WTC11 (cell line): ENCODE measurements at regions of chr22 and their contacts with region 1.

Region 1: GRCh38 chr22:47012589-47013411 is 250.3 kb downstream of the TBC1D22A start:
- DNase-seq: no peak
- ATAC-seq: peak; percentile 61
- H3K4me3 Mint-ChIP-seq: no peak overlapping the region
- H3K27ac Mint-ChIP-seq: peak overlapping the region; percentile 69
- H3K4me1 Mint-ChIP-seq: peaks cover 13% of the 10 kb centered on the region
- H3K27me3 Mint-ChIP-seq: no peaks in the 10 kb centered on the region
- CTCF ChIP-seq: 0 out of 2 replicates have a peak, but pooled peaks have one; percentile 17

Region 2: DNA sequence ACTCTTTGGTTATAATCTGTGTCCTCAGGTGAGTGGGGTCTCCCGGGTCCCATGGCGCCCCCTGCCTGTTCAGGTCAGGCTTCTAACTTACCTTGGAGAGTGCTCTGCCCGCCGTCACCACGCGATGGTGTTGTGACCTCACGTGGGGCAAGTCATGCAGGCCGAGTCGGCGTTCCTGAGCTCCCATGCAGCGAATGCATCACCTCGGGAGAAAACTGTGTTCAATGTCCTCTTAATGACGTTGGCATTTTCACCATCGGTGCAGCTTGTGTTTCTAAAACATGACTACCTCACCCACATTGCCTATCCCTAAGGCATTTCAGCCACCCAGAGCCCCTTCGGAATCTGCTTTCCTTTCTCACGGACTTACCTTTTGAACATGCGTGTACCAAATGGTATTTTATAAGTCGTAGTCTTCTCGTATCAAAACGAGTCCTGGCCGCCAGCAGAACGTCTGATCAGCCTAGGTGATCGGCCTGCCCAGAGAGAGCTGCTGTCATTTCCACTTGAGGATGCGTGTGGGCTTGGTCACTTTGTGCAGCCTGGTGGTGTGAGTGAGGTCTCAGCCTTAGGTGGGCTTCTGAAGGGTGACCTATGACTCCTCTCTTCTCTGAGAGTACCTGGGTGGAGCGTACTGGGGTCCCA is 185.5 kb before region 1 on chr22:
- CTCF ChIA-PET with region 1: interaction called, 15 read pairs
- POLR2A ChIA-PET with region 1: no interaction called
- DNase-seq: peak; percentile 86
- ATAC-seq: peak; percentile 97
- H3K4me3 Mint-ChIP-seq: no peak overlapping the region
- H3K27ac Mint-ChIP-seq: peak overlapping the region; percentile 37; the same call in 1 of the 2 replicates
- H3K4me1 Mint-ChIP-seq: peaks cover 26% of the 10 kb centered on the region
- H3K27me3 Mint-ChIP-seq: no peaks in the 10 kb centered on the region
- CTCF ChIP-seq: peak; percentile 47

Region 3: DNA sequence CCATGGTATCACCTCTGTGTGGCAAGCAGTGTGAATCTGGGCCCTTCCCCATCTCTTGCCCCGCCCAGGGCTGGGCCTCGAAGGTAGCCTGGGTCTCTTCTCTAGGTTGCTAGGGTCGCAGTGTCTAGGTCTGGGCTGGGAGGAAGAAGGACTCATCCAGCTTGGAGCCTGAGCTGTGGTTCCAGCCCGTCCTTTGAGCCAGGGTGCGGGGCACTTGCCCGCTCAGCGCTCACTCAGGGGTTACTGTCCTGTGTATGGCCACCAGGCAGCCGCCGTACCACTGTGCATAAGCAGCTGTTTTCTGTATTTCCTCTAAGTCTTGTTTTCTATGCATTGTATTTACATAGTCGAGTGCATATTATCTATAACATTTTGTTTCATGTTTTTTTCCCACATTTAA is 89.4 kb before region 1 on chr22:
- CTCF ChIA-PET with region 1: no interaction called
- POLR2A ChIA-PET with region 1: no interaction called
- DNase-seq: no peak
- ATAC-seq: no peak
- H3K4me3 Mint-ChIP-seq: no peak overlapping the region
- H3K27ac Mint-ChIP-seq: no peak overlapping the region
- H3K4me1 Mint-ChIP-seq: peaks cover 3% of the 10 kb centered on the region; the same call in 1 of the 2 replicates
- H3K27me3 Mint-ChIP-seq: no peaks in the 10 kb centered on the region
- CTCF ChIP-seq: no peak

Region 4: DNA sequence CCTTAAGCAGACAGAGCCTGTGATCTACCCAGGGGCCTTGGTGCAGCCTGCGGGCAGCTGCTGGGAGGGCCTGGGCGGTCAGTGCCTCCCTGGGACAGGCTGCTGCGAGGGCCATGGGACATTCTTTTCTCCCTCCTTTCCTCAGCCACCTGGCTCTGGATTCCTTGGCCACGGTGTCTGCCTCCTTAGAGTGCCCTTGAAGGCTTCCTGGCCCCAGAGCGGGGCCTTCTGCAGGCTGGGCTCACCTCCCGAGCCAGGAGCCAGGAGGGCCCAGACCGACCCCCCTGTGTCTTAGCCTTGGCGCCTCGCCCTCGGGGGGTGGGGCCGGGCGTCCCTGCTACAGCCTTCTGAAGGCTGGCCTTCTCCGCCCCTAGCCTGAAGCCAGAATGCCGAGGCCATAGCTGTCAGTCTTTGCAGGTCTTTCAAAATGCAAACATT is 19.1 kb before region 1 on chr22:
- CTCF ChIA-PET with region 1: interaction called, 18 read pairs
- POLR2A ChIA-PET with region 1: no interaction called
- DNase-seq: no peak
- ATAC-seq: no peak
- H3K4me3 Mint-ChIP-seq: no peak overlapping the region
- H3K27ac Mint-ChIP-seq: no peak overlapping the region
- H3K4me1 Mint-ChIP-seq: peaks cover 9% of the 10 kb centered on the region
- H3K27me3 Mint-ChIP-seq: no peaks in the 10 kb centered on the region
- CTCF ChIP-seq: no peak

Region 5: GRCh38 chr22:47027766-47028165 is 15.0 kb after region 1 on chr22:
- CTCF ChIA-PET with region 1: interaction called, 14 read pairs
- POLR2A ChIA-PET with region 1: no interaction called
- DNase-seq: no peak
- ATAC-seq: peak; percentile 62
- H3K4me3 Mint-ChIP-seq: peak overlapping the region; percentile 48
- H3K27ac Mint-ChIP-seq: peak overlapping the region; percentile 67
- H3K4me1 Mint-ChIP-seq: peaks cover 43% of the 10 kb centered on the region
- H3K27me3 Mint-ChIP-seq: no peaks in the 10 kb centered on the region; the same call in 1 of the 2 replicates
- CTCF ChIP-seq: no peak

Region 6: DNA sequence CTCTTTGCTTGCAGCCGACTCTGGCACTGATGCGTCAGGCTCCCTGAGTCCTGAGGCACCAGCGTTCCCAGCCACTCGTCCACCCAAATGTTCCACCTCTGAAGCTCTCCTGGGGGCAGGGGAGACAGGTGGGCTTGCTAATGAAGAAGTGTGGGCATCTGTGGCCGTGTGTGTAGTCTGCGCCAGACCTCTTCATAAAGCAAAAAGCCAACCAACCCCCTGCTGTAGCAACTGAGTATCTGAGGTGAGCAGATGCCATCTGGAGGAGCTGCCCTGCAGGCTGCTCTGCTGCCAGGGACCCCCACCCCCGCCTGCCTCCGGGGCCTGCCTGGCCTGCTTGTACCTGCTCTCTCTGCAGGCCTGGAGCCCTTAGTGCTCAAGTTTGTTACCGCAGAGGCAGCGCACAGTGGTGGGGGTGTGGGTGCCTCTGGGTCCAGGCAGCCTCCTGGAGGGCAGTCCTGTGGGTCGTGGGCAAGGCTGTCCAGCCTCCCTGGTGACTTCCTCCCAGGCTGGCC is 22.2 kb after region 1 on chr22:
- CTCF ChIA-PET with region 1: interaction called, 11 read pairs
- POLR2A ChIA-PET with region 1: no interaction called
- DNase-seq: no peak
- ATAC-seq: no peak
- H3K4me3 Mint-ChIP-seq: no peak overlapping the region
- H3K27ac Mint-ChIP-seq: 0 out of 2 replicates have a peak overlapping the region, but pooled peaks have one; percentile 57
- H3K4me1 Mint-ChIP-seq: no peaks in the 10 kb centered on the region; the same call in 1 of the 2 replicates
- H3K27me3 Mint-ChIP-seq: no peaks in the 10 kb centered on the region
- CTCF ChIP-seq: no peak

Region 7: GRCh38 chr22:47065756-47066615 is 53.2 kb after region 1 on chr22:
- CTCF ChIA-PET with region 1: no interaction called
- POLR2A ChIA-PET with region 1: no interaction called
- DNase-seq: no peak
- ATAC-seq: no peak
- H3K4me3 Mint-ChIP-seq: no peak overlapping the region
- H3K27ac Mint-ChIP-seq: peak overlapping the region; percentile 82
- H3K4me1 Mint-ChIP-seq: peaks cover 8% of the 10 kb centered on the region
- H3K27me3 Mint-ChIP-seq: no peaks in the 10 kb centered on the region
- CTCF ChIP-seq: no peak

Region 8: GRCh38 chr22:47161631-47162030 is 148.8 kb after region 1 on chr22:
- CTCF ChIA-PET with region 1: no interaction called
- POLR2A ChIA-PET with region 1: no interaction called
- DNase-seq: peak; percentile 8
- ATAC-seq: no peak
- H3K4me3 Mint-ChIP-seq: no peak overlapping the region
- H3K27ac Mint-ChIP-seq: no peak overlapping the region
- H3K4me1 Mint-ChIP-seq: no peaks in the 10 kb centered on the region
- H3K27me3 Mint-ChIP-seq: no peaks in the 10 kb centered on the region
- CTCF ChIP-seq: no peak